ENCODE measurements at regions of chr14 and their contacts with region 1.

Region 1: DNA sequence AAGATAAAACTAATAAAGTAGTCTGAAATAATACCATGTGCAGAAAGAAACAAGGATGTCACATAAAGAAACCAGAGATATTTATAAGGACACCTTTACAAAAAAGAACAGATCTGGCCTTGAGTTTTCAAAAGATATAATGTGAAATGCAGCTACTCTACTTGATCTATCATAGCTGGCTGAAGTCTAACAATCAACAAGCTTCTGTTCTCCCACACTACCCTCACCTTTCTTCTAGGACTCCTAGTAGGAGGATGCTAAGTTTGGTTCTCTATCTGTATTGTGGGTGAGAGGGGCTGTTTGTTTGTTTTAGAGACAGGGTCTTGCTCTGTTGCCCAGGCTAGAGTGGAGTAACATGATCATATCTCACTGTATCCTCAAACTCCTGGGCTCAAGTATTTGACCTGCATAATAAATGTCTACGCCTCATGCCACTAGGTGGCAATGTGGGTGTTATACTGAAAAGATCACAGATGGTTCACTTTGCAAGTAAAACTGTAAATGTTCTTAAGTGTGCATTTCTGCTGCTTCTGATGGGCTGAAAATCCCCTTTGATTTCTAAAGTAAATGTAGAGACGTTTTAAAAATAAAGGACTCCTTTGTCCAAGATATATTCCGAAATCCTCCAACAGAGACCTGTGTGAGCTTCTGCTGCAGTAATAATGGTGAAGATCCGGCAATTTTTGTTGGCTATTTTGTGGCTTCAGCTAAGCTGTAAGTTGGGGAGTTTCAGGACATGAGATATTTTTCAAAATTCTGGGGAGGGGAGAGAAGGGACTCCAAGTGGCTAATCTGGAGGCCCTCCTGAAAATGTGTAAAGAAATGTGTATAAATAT is 269.3 kb downstream of the DAD1 start:
- DNase-seq: peak; percentile 52
- CTCF ChIP-seq: peak; percentile 79

Region 2: DNA sequence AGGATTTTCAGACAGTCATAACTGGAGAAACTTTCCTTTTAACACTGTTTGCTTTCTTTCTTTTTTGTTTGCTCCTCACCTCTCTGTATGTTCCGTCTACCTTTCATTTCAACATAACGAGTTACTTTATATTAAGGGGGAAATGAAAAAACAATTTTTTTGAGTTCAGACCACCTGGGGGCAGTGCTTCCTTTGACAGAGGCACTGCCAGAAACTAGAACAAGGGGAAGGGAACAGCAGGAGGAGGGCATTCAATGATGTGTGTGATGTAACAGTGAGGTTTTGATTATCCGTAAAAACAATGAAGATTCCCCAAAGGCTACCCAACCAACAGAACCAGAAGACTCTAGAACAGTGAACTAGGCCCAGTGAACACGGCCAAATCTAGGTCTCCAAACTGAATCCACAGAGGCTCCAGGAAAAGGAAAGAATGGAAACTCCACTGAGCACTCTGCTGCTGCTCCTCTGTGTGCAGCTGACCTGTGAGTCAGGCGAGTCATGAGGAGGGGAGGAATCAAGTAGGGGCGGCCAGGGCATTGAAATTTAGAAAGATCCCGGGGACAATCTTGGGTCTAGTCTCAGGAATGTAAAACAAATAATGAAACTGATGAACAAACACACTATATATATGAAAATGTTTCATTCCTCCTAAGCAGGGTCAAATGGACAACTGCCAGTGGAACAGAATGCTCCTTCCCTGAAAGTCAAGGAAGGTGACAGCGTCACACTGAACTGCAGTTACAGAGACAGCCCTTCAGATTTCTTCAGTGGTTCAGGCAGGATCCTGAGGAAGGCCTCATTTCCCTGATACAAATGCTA is 54.2 kb before region 1 on chr14:
- CTCF ChIA-PET with region 1: no interaction called
- POLR2A ChIA-PET with region 1: no interaction called
- DNase-seq: no peak
- CTCF ChIP-seq: peak; percentile 16

Region 3: GRCh38 chr14:22303589-22304195 is 16.1 kb before region 1 on chr14:
- CTCF ChIA-PET with region 1: interaction called, 29 read pairs
- POLR2A ChIA-PET with region 1: no interaction called
- DNase-seq: no peak
- CTCF ChIP-seq: peak; percentile 36

Region 4: DNA sequence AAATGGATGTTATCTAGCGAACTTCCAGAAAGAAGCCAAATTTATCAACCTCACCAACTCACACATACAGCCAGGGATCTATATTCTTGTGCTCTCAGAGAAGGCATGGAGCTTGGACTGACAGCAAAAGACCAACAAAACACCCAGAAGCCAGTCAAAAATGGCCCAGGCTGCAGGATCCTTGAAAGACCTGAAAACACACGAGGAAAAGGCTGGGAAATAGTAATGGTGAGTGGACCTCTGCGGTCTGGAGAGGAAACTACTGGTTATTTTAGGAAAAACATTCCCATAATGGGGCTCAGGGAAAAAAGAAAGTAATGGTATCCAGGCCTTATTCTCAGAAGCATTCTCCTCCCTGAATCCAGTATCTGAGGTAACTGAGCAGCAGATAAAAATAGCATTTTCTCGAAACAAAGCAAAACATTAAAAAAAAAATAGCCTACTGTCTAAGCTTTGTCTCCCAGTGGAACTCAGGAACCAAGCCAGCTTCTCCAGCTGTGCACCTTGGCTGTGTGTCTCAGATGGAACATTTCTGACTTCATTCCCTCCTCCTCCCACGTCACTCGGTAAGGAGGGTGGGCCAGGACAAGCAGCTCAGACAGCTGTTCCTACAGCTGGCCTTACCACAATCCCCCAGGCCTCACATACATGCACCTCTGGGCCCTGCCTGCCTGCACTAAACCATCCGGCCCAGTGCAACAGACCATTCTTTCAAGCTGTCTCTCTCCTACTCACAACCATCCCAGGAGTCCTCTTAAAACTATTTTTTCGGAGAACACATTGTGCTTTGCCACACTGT is 19.4 kb after region 1 on chr14:
- CTCF ChIA-PET with region 1: interaction called, 44 read pairs
- POLR2A ChIA-PET with region 1: no interaction called
- DNase-seq: no peak
- CTCF ChIP-seq: no peak

Region 5: GRCh38 chr14:22375321-22375930 is 55.7 kb after region 1 on chr14:
- CTCF ChIA-PET with region 1: interaction called, 135 read pairs
- POLR2A ChIA-PET with region 1: no interaction called
- DNase-seq: peak; percentile 24
- CTCF ChIP-seq: peak; percentile 60

Region 6: DNA sequence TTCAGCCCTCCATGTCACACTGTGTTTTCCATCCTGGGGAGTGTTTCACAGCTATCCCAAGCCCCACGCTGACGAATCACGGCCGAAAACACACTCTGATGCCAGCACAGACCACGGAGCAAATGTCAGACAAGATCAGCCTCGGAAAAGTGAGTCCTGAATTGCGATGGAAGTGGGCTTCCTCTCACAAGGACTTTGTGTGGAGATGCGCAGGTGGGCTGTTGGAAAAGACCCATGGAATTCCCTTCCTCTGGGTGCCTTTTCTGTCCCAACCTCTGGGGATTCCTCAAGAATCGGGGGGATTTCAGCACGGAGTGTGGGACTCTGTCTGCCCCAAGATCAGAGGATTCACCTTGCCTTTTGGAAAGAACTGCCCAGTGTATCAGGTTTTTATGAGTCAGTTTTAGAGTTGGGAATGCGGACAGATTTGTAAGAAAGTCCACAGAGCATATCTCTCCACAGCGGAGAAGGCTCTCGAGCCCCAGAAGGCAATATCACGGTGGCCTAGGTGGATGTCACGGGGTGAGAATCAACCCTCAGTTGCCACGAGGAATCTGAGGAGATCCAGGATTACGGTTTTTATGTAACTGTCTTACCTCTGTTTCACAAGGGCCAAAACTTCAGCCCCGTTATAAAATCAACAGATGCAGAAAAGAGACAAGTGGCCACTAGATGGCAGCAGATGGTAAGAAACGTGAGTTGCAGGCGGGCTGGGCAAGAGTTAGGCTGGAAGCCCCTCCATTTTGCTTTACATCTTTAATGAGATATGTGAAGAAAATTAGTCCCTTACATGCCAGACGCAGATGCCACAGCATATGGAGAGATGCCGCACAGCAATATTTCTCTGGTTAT is 67.4 kb after region 1 on chr14:
- CTCF ChIA-PET with region 1: interaction called, 40 read pairs
- POLR2A ChIA-PET with region 1: no interaction called
- DNase-seq: peak; percentile 79
- CTCF ChIP-seq: peak; percentile 76

Region 7: GRCh38 chr14:22483863-22484593 is 164.3 kb after region 1 on chr14:
- CTCF ChIA-PET with region 1: interaction called, 12 read pairs
- POLR2A ChIA-PET with region 1: no interaction called
- DNase-seq: no peak
- CTCF ChIP-seq: no peak